Heart right ventricle (tissue), 16 donors: ENCODE measurements at regions of chr22 and their contacts with region 1.

Region 1: DNA sequence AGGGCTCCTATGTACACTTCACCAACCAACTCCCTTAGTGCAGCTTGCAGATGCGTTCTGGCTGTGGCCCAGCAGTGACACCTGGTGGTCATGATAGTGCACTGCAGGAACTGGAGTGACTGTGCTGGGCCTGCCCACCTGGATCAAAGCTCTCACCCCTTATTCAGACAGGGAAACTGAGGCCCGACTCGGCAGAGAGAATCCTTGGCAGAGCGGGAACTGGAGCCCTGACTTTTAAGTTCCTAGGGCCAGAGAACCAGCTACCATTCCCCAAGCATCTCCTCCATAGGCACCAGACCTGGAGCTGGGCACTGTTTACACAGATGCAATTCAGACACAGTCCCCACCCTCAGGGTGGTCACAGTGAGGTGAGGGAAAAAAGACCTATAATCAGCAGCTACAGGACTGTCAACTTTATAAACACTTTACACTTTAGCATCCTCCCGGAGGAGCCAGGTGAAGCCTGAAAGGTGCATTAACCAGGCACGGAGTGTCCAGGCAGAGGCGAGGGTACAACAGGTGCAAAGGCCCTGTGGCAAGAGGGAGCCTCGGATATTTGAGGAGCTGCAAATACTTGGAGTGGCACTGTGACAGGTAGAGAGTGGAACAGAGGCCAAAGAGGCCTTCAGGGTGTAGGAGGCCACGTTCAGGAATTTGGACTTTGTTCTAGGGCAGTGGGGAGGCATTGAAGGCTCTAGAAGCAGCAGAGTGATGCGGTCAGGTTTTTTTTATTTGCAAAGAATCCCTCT is 22.0 kb downstream of the RHBDD3 start:
- DNase-seq: peak; percentile 58 to 62
- ATAC-seq: peak; percentile 75 to 94 (median 92)
- H3K4me3 ChIP-seq: no peak overlapping the region
- H3K27ac ChIP-seq: no peak overlapping the region
- H3K4me1 ChIP-seq: peaks cover 0 to 7% (median 0%) of the 10 kb centered on the region in 9 donors
- H3K27me3 ChIP-seq: no peaks in the 10 kb centered on the region
- CTCF ChIP-seq: peak; percentile 94 to 98 (median 97)

Region 2: DNA sequence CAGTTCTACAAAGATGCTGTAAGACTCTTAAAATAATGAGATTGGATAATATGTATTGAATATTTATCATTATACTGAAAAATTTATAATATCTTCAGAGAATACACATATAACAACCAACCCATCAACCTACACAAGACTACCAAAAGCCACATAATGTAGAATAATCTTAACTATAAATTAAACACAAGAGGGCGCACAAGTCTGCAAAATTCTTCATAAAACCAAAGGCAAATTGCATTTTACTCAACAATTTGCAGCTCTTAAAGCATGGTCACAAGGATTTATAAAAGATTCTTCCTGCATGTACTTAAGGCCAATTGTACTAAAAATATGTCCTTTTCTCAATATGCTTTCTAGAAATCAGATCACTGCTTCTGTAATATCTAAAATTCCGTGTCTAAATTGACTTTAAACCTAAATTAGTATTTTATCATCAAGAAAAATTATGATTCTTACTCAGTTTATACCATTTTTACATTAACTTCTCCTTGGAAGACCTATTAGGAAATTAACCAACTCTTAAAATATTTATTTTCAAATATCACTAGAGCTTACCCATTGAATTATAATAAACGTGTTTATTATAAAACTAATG is 645.2 kb before region 1 on chr22:
- intact Hi-C with region 1: loop called in 3 of 10 experiments (anchors 10 kb)
- DNase-seq: peak in 1 of 2 donors; percentile 17
- ATAC-seq: peak in 4 of 8 donors; percentile 28 to 39 (median 34)
- H3K4me3 ChIP-seq: no peak overlapping the region
- H3K27ac ChIP-seq: no peak overlapping the region
- H3K4me1 ChIP-seq: no peaks in the 10 kb centered on the region
- H3K27me3 ChIP-seq: no peaks in the 10 kb centered on the region
- CTCF ChIP-seq: peak in 8 of 9 donors; percentile 36 to 78 (median 62)

Region 3: DNA sequence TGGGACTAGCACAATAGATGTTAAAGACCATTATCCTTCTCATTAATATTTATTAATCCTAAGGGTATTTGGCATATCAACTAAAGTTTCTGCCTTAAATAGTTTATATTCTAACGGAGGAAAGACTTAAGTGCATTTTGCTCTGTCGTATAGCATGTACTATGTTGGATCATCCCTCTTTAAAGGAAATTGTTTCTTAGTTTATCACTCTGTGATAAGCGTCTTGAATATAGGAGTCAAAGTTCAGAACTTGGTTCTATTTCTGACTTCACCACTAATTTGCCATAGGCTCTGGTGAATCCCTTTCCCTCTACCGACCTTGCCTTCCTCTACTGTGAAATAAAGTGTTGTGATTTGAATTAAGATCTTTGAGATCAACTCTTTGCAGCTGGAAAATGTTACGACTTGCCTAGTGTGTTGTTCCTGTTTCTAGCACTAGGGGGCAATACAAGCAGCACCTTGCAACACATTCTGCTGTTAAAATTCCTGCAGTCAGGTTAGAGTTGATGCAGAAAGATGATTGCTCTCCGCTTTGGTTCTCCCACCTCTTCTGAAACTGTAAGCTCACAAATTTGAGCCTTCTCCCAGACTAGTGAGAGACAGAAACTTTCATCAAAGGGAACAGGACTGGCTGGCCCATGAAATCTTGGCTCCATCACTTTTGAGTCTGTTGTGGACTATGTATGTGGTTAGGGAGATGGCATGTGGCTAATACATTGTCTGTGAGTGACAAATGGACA is 390.3 kb before region 1 on chr22:
- intact Hi-C with region 1: loop called in 7 of 10 experiments (anchors 5 to 10 kb)
- DNase-seq: peak in 1 of 2 donors; percentile 57
- ATAC-seq: peak in 7 of 8 donors; percentile 41 to 62 (median 54)
- H3K4me3 ChIP-seq: no peak overlapping the region
- H3K27ac ChIP-seq: no peak overlapping the region
- H3K4me1 ChIP-seq: peaks cover 0 to 7% (median 0%) of the 10 kb centered on the region in 9 donors
- H3K27me3 ChIP-seq: no peaks in the 10 kb centered on the region
- CTCF ChIP-seq: peak; percentile 84 to 94 (median 91)

Region 4: DNA sequence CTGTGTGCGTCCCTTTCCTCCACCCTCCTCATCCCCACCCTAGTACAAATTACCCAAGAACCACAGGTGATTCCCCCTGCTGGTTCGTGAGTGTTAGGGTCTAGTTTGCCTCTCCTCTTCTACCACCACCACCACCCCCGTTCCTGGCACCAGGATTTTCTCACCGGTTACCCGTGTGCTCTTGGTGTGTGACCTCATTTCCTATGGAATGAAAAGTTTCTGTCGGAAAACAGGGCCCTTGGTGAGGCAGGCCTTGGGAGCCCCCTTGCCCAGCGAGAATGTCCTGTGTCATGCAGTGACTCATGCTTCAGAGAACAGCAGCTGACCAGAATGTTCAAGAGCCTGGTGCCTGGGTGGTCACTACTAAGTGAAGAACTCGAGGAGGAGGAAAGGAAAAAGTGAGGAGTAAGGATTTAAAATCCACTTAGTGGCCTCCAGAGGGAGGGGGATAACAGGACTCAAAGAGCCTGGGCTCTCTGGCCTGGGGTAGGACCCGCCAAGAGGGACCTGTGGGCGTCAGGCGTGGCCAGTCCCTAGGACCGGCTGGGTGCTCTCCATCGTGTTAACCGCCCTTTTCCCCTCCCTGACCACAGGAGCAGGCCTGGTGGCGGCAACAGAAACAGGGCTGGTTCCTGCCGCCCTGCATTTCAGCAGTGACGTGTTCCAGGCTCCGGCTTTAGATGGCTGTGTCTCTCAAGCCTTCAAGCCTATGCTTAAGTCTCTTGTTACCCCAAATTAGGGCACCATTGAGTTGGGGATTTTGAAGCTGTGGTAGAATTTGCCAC is 214.4 kb before region 1 on chr22:
- intact Hi-C with region 1: loop called in 1 of 10 experiments (anchors 10 kb)
- DNase-seq: peak; percentile 22 to 52
- ATAC-seq: peak; percentile 77 to 90 (median 86)
- H3K4me3 ChIP-seq: peak overlapping the region in 9 of 10 donors; percentile 24 to 58 (median 55)
- H3K27ac ChIP-seq: peak overlapping the region; percentile 29 to 84 (median 76)
- H3K4me1 ChIP-seq: peaks cover 6 to 34% (median 20%) of the 10 kb centered on the region in 9 donors
- H3K27me3 ChIP-seq: peaks cover 0 to 26% (median 0%) of the 10 kb centered on the region in 7 donors
- CTCF ChIP-seq: peak in 1 of 9 donors; percentile 8

Region 5: DNA sequence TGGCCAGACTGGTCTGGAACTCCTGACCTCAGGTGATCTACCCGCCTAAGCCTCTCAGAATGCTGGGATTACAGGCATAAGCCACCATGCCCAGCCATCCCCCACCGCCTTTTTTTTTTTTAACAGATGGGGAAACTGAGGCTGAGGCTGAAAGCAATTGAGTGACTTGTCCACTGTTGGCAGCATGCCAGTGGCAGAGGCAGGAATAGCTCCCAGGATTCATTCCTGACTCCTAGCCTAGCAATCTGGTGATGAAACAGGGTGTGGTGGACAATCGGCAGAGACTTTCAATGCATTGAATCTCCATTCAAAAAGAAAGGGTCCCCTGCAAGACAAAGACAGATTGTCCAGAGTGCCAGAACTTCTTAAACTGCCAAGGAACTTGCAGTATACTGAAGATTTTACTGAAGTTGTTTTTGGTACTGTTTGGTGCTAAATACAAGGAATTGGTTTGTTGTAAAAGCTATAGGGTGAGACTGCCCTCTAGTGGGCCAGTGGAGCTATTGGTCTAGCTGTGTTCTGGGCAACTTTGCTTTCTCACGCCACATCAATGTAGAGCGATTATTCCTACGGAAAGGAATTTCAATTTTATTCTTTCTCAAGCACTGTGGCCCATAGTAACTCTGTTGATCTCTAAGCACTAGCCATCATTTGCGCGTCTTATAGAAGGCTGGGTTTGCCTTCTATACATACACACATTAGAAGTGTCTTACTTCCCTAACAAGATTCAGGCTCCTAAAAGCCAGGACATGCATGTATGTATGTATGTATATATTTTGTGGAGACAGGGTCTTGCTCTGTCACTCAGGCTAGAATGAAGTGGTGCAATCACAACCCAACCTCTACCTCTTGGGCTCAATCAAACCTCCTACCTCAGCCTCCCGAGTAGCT is 205.2 kb before region 1 on chr22:
- intact Hi-C with region 1: loop called in 5 of 10 experiments (anchors 5 to 10 kb)
- DNase-seq: peak; percentile 29 to 73
- ATAC-seq: peak; percentile 67 to 84 (median 76)
- H3K4me3 ChIP-seq: no peak overlapping the region
- H3K27ac ChIP-seq: peak overlapping the region in 1 of 10 donors; percentile 18
- H3K4me1 ChIP-seq: peaks cover 0 to 14% (median 4%) of the 10 kb centered on the region in 9 donors
- H3K27me3 ChIP-seq: no peaks in the 10 kb centered on the region
- CTCF ChIP-seq: peak; percentile 90 to 99 (median 97)

Region 6: GRCh38 chr22:29202212-29203192 is 43.3 kb before region 1 on chr22:
- intact Hi-C with region 1: loop called in 3 of 10 experiments (anchors 2 to 5 kb)
- DNase-seq: peak; percentile 51 to 70
- ATAC-seq: peak; percentile 50 to 81 (median 65)
- H3K4me3 ChIP-seq: no peak overlapping the region
- H3K27ac ChIP-seq: peak overlapping the region in 9 of 10 donors; percentile 10 to 64 (median 49)
- H3K4me1 ChIP-seq: peaks cover 5 to 31% (median 19%) of the 10 kb centered on the region in 9 donors
- H3K27me3 ChIP-seq: peaks cover 0 to 26% (median 4%) of the 10 kb centered on the region in 7 donors
- CTCF ChIP-seq: peak in 6 of 9 donors; percentile 24 to 38 (median 28)

Region 7: DNA sequence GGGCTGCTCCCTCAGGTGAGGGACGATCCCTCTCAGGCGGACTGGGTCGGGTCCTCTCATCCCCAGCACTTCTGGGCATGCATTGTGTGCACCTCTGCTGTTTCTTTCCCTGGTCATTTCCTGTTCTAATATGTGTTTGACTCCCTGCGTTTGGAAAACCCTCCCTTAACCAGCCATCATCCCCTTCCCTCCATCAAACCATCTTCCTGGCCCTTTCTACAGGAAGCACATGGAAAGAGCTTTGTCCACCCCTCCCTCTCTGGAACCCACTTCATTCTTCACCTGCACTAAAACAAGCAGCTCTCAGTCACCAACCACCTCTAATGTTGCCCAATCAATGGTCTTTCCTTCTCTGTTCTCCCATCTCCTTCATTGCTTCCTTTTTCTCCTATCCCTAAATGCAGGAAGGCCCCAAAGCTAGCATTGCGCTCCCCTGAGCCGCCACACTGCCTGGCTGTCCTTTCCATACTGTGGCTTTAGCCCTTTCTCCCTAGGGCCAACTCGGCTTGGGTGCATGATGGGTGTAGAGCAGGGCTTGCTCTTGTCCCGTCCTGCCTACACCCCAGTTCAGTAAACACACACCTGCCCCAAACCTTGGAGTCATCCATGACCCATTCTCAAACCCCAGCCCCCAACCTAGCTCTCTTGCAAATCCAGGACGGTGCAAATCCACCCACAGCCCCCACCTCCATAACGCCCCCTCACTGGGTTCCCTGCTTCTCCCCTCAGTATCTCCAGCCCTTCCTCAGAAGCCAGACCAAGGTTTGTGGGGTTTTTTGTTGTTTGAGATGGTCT is 55.2 kb after region 1 on chr22:
- intact Hi-C with region 1: no loop called
- DNase-seq: no peak
- ATAC-seq: no peak
- H3K4me3 ChIP-seq: no peak overlapping the region
- H3K27ac ChIP-seq: no peak overlapping the region
- H3K4me1 ChIP-seq: peaks cover 2 to 26% (median 12%) of the 10 kb centered on the region in 9 donors
- H3K27me3 ChIP-seq: no peaks in the 10 kb centered on the region
- CTCF ChIP-seq: no peak